ENCODE measurements at regions of chr6 and their contacts with region 1.

Region 1: GRCh38 chr6:118551063-118552053 is 3.3 kb downstream of the PLN start:
- DNase-seq: peak; percentile 38
- CTCF ChIP-seq: peak; percentile 59

Region 2: GRCh38 chr6:118283766-118284165 is 267.6 kb before region 1 on chr6:
- in situ Hi-C with region 1: loop called (anchors 10 kb)
- DNase-seq: peak; percentile 18
- CTCF ChIP-seq: peak; percentile 64

Measured in GM13977 (cell line).